K562 (cell line): ENCODE measurements at regions of chr3 and their contacts with region 1.

Region 1: GRCh38 chr3:42660893-42661292 is 7.4 kb downstream of the ZBTB47 start:
- DNase-seq: peak; percentile 60 to 78 (median 70)
- ATAC-seq: peak; percentile 78
- H3K4me3 ChIP-seq: no peak overlapping the region
- H3K27ac ChIP-seq: no peak overlapping the region
- H3K4me1 ChIP-seq: peaks cover 0 to 24% of the 10 kb centered on the region in 2 experiments; a peak in 1 of 5 replicates
- H3K27me3 ChIP-seq: no peaks in the 10 kb centered on the region
- CTCF ChIP-seq: peak; percentile 78 to 97 (median 97)
- EP300 ChIP-seq: no peak
- POLR2A ChIP-seq: no peak
- RAD21 ChIP-seq: peak; percentile 68 to 84

Region 2: GRCh38 chr3:42749753-42750231 is 88.9 kb after region 1 on chr3:
- CTCF ChIA-PET with region 1: interaction called, 15 read pairs
- POLR2A ChIA-PET with region 1: interaction called, 3 read pairs
- in situ Hi-C with region 1: no loop called
- intact Hi-C with region 1: loop called (anchors 1 kb)
- DNase-seq: peak; percentile 58 to 72 (median 62)
- ATAC-seq: peak; percentile 90
- H3K4me3 ChIP-seq: no peak overlapping the region
- H3K27ac ChIP-seq: no peak overlapping the region
- H3K4me1 ChIP-seq: no peaks in the 10 kb centered on the region; a peak in 1 of 5 replicates
- H3K27me3 ChIP-seq: peaks cover 8 to 56% of the 10 kb centered on the region in 2 experiments; a peak in 4 of 5 replicates
- CTCF ChIP-seq: peak; percentile 84 to 90 (median 88)
- EP300 ChIP-seq: no peak
- POLR2A ChIP-seq: no peak
- RAD21 ChIP-seq: peak; percentile 61 to 79

Region 3: GRCh38 chr3:42755681-42756578 is 95.0 kb after region 1 on chr3:
- CTCF ChIA-PET with region 1: no interaction called
- POLR2A ChIA-PET with region 1: interaction called, 3 read pairs
- in situ Hi-C with region 1: no loop called
- intact Hi-C with region 1: loop called (anchors 1 kb)
- DNase-seq: peak; percentile 42 to 71 (median 52)
- ATAC-seq: peak; percentile 97
- H3K4me3 ChIP-seq: no peak overlapping the region
- H3K27ac ChIP-seq: no peak overlapping the region
- H3K4me1 ChIP-seq: no peaks in the 10 kb centered on the region
- H3K27me3 ChIP-seq: peaks cover 15 to 45% of the 10 kb centered on the region in 2 experiments
- CTCF ChIP-seq: peak; percentile 76 to 80 (median 77)
- EP300 ChIP-seq: no peak
- POLR2A ChIP-seq: no peak
- RAD21 ChIP-seq: peak; percentile 54 to 68